Dendritic cell treated with granulocyte-macrophage colony-stimulating factor and Interleukin-4, amounts not matched to agents 40 ng/mL and 50 ng/mL, for 4 days (primary cell): ENCODE measurements at regions of chr2 and their contacts with region 1.

Region 1: GRCh38 chr2:27086090-27086723 is 365 bp upstream of the KHK start:
- H3K4me3 Mint-ChIP-seq: peak overlapping the region; percentile 87
- H3K27ac Mint-ChIP-seq: peak overlapping the region; percentile 89
- H3K4me1 Mint-ChIP-seq: peaks cover 50% of the 10 kb centered on the region
- H3K27me3 Mint-ChIP-seq: peaks cover 2% of the 10 kb centered on the region

Region 2: GRCh38 chr2:26968001-26968400 is 118.2 kb before region 1 on chr2:
- intact Hi-C with region 1: loop called (anchors 5 kb)
- H3K4me3 Mint-ChIP-seq: no peak overlapping the region
- H3K27ac Mint-ChIP-seq: no peak overlapping the region
- H3K4me1 Mint-ChIP-seq: peaks cover 23% of the 10 kb centered on the region
- H3K27me3 Mint-ChIP-seq: peaks cover 27% of the 10 kb centered on the region

Region 3: DNA sequence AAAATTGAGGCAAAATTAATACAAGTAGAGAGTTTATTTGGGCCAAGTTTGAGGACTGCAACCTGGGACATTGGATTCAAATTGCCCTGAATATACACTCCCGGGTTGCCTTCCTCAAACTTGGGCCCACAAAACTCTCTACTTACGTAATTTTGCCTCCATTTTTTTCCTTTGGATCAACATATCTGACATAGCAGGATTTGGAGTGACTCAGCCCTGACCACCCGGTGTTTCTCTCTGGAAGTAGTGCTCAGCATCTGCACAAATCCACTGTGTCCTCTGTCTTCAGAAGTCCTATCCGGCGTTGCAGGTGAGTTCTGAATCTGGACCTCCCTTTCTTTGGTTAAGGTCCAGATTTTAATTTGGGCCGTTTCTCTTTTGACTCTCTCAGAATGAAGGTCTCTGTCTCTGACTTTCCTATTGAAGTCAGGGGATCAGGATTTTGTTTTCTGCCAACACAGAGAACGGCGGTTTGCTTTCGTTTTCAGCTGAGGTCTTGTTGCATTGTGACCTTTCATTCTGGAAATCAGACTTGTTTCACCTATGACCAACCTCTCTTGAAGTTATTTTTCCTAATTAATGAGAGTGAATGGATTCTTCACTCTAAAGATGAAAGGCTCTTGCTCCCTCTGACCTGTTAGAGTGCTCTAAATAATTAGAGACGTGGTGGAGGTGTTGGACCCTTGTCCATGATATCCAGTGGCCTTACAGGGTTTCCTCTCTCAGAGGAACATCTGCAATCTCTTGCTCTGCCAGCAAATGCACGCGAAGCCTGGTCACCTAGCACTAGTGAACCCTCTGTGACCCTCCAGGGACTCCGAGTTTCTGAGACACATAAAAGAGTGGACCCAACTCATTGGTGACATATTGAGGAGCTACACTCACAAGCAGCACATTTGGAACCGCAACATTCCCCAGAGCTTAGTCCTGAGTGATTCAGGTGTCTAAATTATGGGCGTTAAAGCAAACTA is 76.2 kb after region 1 on chr2:
- intact Hi-C with region 1: no loop called
- H3K4me3 Mint-ChIP-seq: no peak overlapping the region
- H3K27ac Mint-ChIP-seq: no peak overlapping the region
- H3K4me1 Mint-ChIP-seq: no peaks in the 10 kb centered on the region
- H3K27me3 Mint-ChIP-seq: no peaks in the 10 kb centered on the region

Region 4: GRCh38 chr2:27211829-27212627 is 125.8 kb after region 1 on chr2 and contains the starts of genes ATRAID and SLC5A6:
- intact Hi-C with region 1: loop called (anchors 5 kb)
- H3K4me3 Mint-ChIP-seq: peak within 1 kb of the TSS; percentile 91
- H3K27ac Mint-ChIP-seq: peak within 1 kb of the TSS; percentile 93
- H3K4me1 Mint-ChIP-seq: peaks cover 37% of the 10 kb centered on the region
- H3K27me3 Mint-ChIP-seq: no peaks in the 10 kb centered on the region